Tibial artery (tissue), 4 donors: ENCODE measurements at regions of chr5 and their contacts with region 1.

Region 1: DNA sequence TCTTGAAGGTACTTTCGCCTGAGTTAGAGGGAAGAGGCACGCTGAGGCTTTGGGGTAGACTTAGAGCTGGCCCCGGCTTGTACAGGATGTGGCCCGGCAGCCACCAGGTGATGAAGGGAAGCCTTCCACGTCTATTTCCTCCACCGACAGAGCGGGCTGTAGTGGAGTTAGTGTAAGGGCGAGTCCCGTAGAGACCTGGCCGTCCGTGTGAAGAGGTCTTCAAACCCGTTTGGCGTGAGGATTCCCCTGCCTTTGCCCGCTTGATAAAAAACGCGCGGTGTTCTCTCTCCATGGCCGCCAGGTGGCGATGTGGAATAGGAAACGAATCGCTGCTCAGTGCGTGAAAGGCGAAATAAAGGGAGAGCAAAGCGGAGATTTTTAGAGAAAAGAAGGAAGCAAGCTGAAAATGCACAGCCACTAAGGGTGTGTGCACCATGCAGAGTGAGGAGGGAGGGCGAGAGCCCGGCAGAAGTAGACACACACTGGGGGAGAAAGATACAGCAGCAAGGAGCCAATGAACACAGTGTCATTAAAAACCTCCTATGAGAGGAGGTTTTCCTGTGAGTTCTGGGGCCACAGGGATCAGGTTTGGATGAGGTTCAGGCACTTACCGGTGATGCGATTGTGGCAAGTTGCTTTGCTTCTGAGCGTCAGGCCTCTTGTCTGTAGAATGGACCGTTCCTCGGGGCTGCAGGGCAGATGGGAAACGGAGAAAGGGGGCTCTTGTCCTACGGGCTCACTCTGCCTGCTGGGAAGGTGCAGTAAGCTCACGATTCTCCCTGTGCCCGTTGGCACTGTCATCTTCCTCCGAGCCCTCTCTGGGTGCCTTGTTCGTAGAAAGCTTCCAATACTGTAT is 34.2 kb downstream of the STC2 start:
- DNase-seq: peak; percentile 81 to 84
- H3K4me3 ChIP-seq: no peak overlapping the region
- H3K27ac ChIP-seq: no peak overlapping the region
- H3K4me1 ChIP-seq: peaks cover 0 to 10% (median 4%) of the 10 kb centered on the region in 4 donors
- H3K27me3 ChIP-seq: peaks cover 0 to 31% of the 10 kb centered on the region in 2 donors
- CTCF ChIP-seq: peak; percentile 77 to 93

Region 2: DNA sequence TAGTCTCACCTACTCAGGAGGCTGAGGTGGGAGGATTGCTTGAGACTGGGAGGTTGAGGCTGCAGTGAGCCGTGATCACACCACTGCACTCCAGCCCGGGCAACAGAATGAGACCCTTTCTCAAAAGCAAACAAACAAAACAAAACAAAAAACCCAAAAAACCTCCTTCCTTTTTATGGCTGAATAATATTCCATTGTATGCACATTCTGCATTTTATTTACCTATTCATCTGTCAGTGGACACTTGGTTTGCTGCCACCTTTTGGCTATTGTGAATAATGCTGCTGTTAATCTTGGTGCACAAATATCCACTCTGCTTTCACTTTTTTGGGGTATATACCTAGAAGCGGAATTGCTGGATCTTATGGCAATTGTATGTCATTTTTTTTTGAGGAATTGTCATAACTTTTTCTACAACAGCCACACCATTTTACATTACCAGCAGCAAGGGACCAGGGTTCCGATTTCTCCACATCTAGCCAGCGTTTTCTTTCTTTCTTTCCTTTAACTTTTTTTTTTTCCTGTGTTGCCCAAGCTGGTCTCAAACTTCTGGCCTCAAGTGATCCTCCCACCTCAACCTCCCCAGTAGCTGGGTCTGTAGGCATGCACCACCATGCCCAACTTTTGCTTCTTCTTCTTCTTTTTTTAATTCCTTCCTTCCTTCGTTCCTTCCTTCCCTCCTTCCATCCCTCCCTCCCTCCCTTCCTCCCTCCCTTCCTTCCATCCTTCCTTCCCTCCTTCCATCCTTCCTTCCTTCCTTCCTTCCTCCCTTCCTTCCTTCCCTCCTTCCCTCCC is 89.7 kb before region 1 on chr5:
- intact Hi-C with region 1: no loop called
- DNase-seq: no peak
- H3K4me3 ChIP-seq: no peak overlapping the region
- H3K27ac ChIP-seq: no peak overlapping the region
- H3K4me1 ChIP-seq: peaks cover 0 to 7% (median 0%) of the 10 kb centered on the region in 4 donors
- H3K27me3 ChIP-seq: peaks cover 0 to 48% of the 10 kb centered on the region in 2 donors
- CTCF ChIP-seq: peak; percentile 44 to 51

Region 3: GRCh38 chr5:173334286-173334685 is 40.2 kb after region 1 on chr5:
- intact Hi-C with region 1: loop called (anchors 2 kb)
- DNase-seq: no peak
- H3K4me3 ChIP-seq: no peak overlapping the region
- H3K27ac ChIP-seq: no peak overlapping the region
- H3K4me1 ChIP-seq: peaks cover 0 to 9% (median 7%) of the 10 kb centered on the region in 4 donors
- H3K27me3 ChIP-seq: peaks cover 0 to 42% of the 10 kb centered on the region in 2 donors
- CTCF ChIP-seq: no peak

Region 4: GRCh38 chr5:173352366-173353349 is 58.6 kb after region 1 on chr5:
- intact Hi-C with region 1: no loop called
- DNase-seq: no peak
- H3K4me3 ChIP-seq: no peak overlapping the region
- H3K27ac ChIP-seq: no peak overlapping the region
- H3K4me1 ChIP-seq: no peaks in the 10 kb centered on the region
- H3K27me3 ChIP-seq: peaks cover 0 to 6% of the 10 kb centered on the region in 2 donors
- CTCF ChIP-seq: no peak

Region 5: GRCh38 chr5:173498286-173498685 is 204.2 kb after region 1 on chr5:
- intact Hi-C with region 1: loop called (anchors 5 kb)
- DNase-seq: peak; percentile 57 to 79
- H3K4me3 ChIP-seq: no peak overlapping the region
- H3K27ac ChIP-seq: peak overlapping the region; percentile 72 to 75
- H3K4me1 ChIP-seq: peaks cover 0 to 62% (median 41%) of the 10 kb centered on the region in 4 donors
- H3K27me3 ChIP-seq: no peaks in the 10 kb centered on the region
- CTCF ChIP-seq: no peak

Region 6: GRCh38 chr5:173573126-173573960 is 279.3 kb after region 1 on chr5:
- intact Hi-C with region 1: loop called (anchors 2 kb)
- DNase-seq: peak; percentile 35 to 85
- H3K4me3 ChIP-seq: peak overlapping the region in 1 of 2 donors; percentile 0
- H3K27ac ChIP-seq: no peak overlapping the region
- H3K4me1 ChIP-seq: peaks cover 0 to 7% (median 0%) of the 10 kb centered on the region in 4 donors
- H3K27me3 ChIP-seq: no peaks in the 10 kb centered on the region
- CTCF ChIP-seq: peak; percentile 94 to 98